PC-9 (cell line): ENCODE measurements at regions of chr17 and their contacts with region 1.

Region 1: DNA sequence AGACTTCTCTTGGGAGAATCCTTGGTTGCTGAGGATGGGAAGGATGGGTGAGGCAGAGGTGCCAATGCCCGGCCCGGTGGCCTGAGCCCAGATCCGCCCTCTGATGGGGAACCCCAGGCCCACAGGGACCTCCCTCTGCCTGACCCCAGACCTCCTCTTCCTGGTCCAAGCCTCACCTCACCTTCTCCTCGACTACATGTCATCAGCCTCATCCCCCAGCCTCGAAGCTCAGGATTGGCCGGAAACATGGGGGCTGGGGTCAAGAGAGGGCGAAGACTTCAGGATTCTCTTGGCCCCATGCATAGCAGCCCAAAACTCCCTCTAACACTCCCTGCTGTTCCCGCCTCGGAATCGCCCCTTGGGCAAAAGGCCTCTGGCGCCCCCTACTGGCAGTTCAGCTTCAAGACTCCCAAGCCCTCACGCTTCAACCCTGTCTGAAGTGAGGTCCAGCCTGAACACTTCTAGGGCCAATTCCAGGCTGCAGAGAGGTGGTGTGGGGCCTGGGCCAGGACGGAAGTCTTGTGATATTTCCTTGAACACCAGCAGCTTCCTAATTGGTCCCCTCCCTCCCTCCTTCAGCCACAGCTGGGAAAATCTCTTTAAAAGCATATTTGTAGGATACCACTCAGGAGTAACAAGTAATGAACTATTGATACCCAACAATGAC is 47.2 kb downstream of the ARHGAP27 start:
- DNase-seq: peak; percentile 65 to 85
- H3K4me3 ChIP-seq: no peak overlapping the region
- H3K27ac ChIP-seq: no peak overlapping the region
- H3K4me1 ChIP-seq: peaks cover 22% of the 10 kb centered on the region
- H3K27me3 ChIP-seq: no peaks in the 10 kb centered on the region
- CTCF ChIP-seq: peak; percentile 100

Region 2: GRCh38 chr17:45235416-45236281 is 149.8 kb before region 1 on chr17:
- CTCF ChIA-PET with region 1: no interaction called
- POLR2A ChIA-PET with region 1: no interaction called
- intact Hi-C with region 1: no loop called
- DNase-seq: peak in 1 of 2 experiments; percentile 60
- H3K4me3 ChIP-seq: no peak overlapping the region
- H3K27ac ChIP-seq: no peak overlapping the region
- H3K4me1 ChIP-seq: peaks cover 12% of the 10 kb centered on the region
- H3K27me3 ChIP-seq: no peaks in the 10 kb centered on the region
- CTCF ChIP-seq: peak; percentile 92

Region 3: GRCh38 chr17:45277216-45277849 is 108.1 kb before region 1 on chr17:
- CTCF ChIA-PET with region 1: interaction called, 16 read pairs
- POLR2A ChIA-PET with region 1: no interaction called
- intact Hi-C with region 1: loop called (anchors 1 kb)
- DNase-seq: peak; percentile 88 to 89
- H3K4me3 ChIP-seq: no peak overlapping the region
- H3K27ac ChIP-seq: peak overlapping the region; percentile 17
- H3K4me1 ChIP-seq: peaks cover 18% of the 10 kb centered on the region
- H3K27me3 ChIP-seq: no peaks in the 10 kb centered on the region
- CTCF ChIP-seq: peak; percentile 95